A549 (cell line): ENCODE measurements at regions of chr10 and their contacts with region 1.

Region 1: GRCh38 chr10:784403-785088 is 95.1 kb upstream of the DIP2C start:
- DNase-seq: peak; percentile 36 to 54
- ATAC-seq: peak; percentile 53 to 54
- H3K4me3 ChIP-seq: peak overlapping the region; percentile 49
- H3K27ac ChIP-seq: peak overlapping the region; percentile 64 to 82; a peak in 5 of 6 replicates
- H3K4me1 ChIP-seq: peaks cover 11% of the 10 kb centered on the region; the same call in 2 of the 3 replicates
- CTCF ChIP-seq: 0 out of 3 replicates have a peak, but pooled peaks have one; percentile 8
- EP300 ChIP-seq: no peak
- POLR2A ChIP-seq: no peak
- RAD21 ChIP-seq: 0 out of 5 replicates have a peak, but pooled peaks of 1 of the 2 experiments have one; percentile 6

Region 2: DNA sequence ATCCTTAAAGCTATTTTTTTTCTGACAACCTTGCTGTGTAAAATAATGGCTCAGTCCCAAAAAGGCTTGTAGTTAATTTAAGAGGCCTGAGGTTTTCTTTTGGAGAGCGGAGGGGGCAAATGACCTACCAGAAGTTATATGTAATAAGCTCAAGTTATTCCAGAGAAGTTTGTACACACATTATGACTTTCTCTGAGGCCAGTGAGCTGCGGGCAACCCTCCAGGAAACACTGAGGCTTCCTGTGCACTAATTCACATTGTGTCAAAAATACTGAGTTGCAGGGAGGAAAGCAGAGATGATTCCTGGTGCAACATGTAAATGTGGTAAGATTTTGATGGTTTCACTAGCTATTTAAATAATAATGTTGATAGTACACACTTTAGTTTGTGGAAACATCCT is 283.7 kb before region 1 on chr10:
- CTCF ChIA-PET with region 1: interaction called, 10 read pairs
- POLR2A ChIA-PET with region 1: no interaction called
- DNase-seq: no peak
- ATAC-seq: no peak
- H3K4me3 ChIP-seq: no peak overlapping the region
- H3K27ac ChIP-seq: no peak overlapping the region
- H3K4me1 ChIP-seq: no peaks in the 10 kb centered on the region
- CTCF ChIP-seq: no peak
- EP300 ChIP-seq: no peak
- POLR2A ChIP-seq: no peak
- RAD21 ChIP-seq: no peak

Region 3: DNA sequence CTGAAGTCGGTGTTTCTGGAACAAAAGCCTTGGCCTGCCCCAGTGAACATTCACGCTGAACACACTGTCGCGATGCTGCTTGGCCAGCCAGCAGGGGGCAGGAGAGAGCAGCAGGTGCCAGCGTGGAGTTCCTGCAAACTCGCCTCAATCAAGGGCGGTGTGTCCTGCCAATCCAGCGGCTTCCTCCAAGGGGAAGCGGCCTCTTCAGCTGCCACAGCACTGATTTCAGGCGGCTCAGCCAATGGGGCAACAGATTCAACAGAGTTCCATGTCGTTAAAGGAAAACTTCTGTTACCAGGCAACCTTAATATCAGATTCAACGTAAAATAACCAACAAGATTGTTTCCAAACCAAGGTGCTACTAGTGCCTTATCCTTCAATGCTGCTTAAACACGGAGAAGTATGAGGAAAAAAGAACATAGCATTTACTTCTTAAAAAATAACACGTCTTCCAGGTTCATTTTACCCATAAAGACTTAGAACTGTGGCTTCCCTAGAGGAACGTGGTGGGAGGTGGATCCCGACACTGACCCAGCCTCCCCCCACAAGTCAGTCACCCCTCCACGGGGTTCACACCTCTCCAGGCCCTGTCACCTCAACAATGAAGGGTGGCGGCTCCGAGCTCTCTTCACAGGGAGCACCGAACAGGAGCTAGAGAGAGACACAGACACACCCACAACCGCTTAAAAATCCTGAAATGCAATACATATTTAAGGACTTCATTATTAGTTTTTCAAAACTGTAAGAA is 273.3 kb before region 1 on chr10:
- CTCF ChIA-PET with region 1: interaction called, 94 read pairs
- POLR2A ChIA-PET with region 1: no interaction called
- DNase-seq: peak; percentile 85 to 93
- ATAC-seq: peak; percentile 94 to 98
- H3K4me3 ChIP-seq: no peak overlapping the region
- H3K27ac ChIP-seq: peak overlapping the region in 1 of 2 experiments; percentile 14; a peak in 1 of 6 replicates
- H3K4me1 ChIP-seq: no peaks in the 10 kb centered on the region
- CTCF ChIP-seq: peak; percentile 92
- EP300 ChIP-seq: no peak
- POLR2A ChIP-seq: no peak
- RAD21 ChIP-seq: peak; percentile 83 to 89

Region 4: DNA sequence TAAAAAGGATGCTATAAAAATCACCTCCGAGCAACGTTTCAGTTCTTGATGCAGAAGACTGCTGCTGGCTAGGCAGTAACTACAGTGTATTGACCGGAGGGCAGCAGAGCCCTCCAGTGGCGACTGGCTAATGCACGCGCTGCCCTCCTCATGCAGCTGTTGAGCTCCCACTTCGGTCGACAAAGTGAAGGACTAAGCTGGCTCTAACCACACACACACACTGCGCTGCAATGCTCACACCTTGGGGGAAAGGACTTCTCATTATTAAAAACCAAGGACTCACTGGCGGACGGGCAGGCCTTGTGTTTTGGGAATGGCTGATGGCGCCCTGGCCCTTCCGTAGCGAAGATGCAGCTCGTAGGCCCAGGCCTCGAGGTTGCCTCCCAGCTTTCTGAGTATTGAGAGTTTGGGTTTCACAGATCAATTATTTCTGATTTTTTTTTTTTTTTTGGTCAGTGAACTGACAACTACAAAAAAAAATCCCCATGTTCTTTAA is 25.9 kb after region 1 on chr10:
- CTCF ChIA-PET with region 1: interaction called, 11 read pairs
- POLR2A ChIA-PET with region 1: no interaction called
- DNase-seq: no peak
- ATAC-seq: peak in 1 of 2 experiments; percentile 48; a peak in 2 of 6 replicates
- H3K4me3 ChIP-seq: no peak overlapping the region
- H3K27ac ChIP-seq: no peak overlapping the region
- H3K4me1 ChIP-seq: no peaks in the 10 kb centered on the region
- CTCF ChIP-seq: peak; percentile 18; the same call in 1 of the 3 replicates
- EP300 ChIP-seq: no peak
- POLR2A ChIP-seq: no peak
- RAD21 ChIP-seq: no peak

Region 5: GRCh38 chr10:896982-897381 is 112.4 kb after region 1 on chr10:
- CTCF ChIA-PET with region 1: no interaction called
- POLR2A ChIA-PET with region 1: no interaction called
- DNase-seq: no peak
- ATAC-seq: no peak
- H3K4me3 ChIP-seq: no peak overlapping the region
- H3K27ac ChIP-seq: no peak overlapping the region
- H3K4me1 ChIP-seq: no peaks in the 10 kb centered on the region
- CTCF ChIP-seq: no peak
- EP300 ChIP-seq: no peak
- POLR2A ChIP-seq: no peak
- RAD21 ChIP-seq: no peak